Activated CD8-positive, alpha-beta T cell treated with anti-CD3 and anti-CD28 coated beads, Interleukin-2, amount 10 ng/mL, durations not matched to agents 7 days and 5 days (primary cell): ENCODE measurements at regions of chr13 and their contacts with region 1.

Region 1: GRCh38 chr13:39616087-39616694 is 13.2 kb upstream of the LHFPL6 start:
- DNase-seq: peak; percentile 57
- ATAC-seq: peak; percentile 76
- H3K4me3 Mint-ChIP-seq: no peak overlapping the region
- H3K27ac Mint-ChIP-seq: no peak overlapping the region
- H3K4me1 Mint-ChIP-seq: no peaks in the 10 kb centered on the region
- H3K27me3 Mint-ChIP-seq: peaks cover 11% of the 10 kb centered on the region

Region 2: GRCh38 chr13:39051157-39051556 is 565.0 kb before region 1 on chr13:
- CTCF ChIA-PET with region 1: interaction called, 12 read pairs
- POLR2A ChIA-PET with region 1: no interaction called
- DNase-seq: no peak
- ATAC-seq: no peak
- H3K4me3 Mint-ChIP-seq: no peak overlapping the region
- H3K27ac Mint-ChIP-seq: no peak overlapping the region
- H3K4me1 Mint-ChIP-seq: no peaks in the 10 kb centered on the region
- H3K27me3 Mint-ChIP-seq: no peaks in the 10 kb centered on the region

Region 3: DNA sequence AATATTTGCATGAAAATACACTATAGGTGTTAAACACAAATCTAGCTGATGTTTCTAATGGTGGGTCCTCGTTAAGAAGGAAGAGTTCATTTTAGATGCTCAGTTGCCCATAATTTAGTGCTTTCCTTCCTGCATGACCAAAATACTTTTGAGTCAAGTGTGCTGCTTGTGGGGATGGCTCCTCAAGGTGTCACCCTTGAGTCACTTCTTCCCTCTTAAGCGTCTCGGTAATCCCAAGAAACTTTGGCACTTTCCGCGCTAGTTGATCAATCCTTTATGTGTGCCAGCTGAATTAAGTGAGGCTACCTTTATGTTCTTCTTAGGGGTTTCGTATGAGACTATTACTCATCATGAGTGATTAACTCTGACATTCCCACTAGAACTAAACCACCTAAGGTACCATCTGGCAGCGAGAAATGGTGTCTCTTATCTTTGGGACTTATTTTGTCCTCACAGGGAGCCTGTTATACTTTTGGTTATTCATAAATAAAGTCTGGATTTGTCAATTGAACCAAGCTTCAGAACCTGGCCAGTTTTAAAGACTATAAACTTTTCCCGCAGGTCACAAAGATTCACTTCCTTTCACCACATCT is 471.2 kb before region 1 on chr13:
- CTCF ChIA-PET with region 1: interaction called, 10 read pairs
- POLR2A ChIA-PET with region 1: no interaction called
- DNase-seq: peak; percentile 35
- ATAC-seq: no peak
- H3K4me3 Mint-ChIP-seq: no peak overlapping the region
- H3K27ac Mint-ChIP-seq: no peak overlapping the region
- H3K4me1 Mint-ChIP-seq: no peaks in the 10 kb centered on the region
- H3K27me3 Mint-ChIP-seq: peaks cover 16% of the 10 kb centered on the region

Region 4: GRCh38 chr13:39575638-39576238 is 40.5 kb before region 1 on chr13:
- CTCF ChIA-PET with region 1: interaction called, 11 read pairs
- POLR2A ChIA-PET with region 1: no interaction called
- DNase-seq: no peak
- ATAC-seq: no peak
- H3K4me3 Mint-ChIP-seq: no peak overlapping the region
- H3K27ac Mint-ChIP-seq: no peak overlapping the region
- H3K4me1 Mint-ChIP-seq: no peaks in the 10 kb centered on the region
- H3K27me3 Mint-ChIP-seq: peaks cover 2% of the 10 kb centered on the region

Region 5: GRCh38 chr13:39604756-39605155 is 11.4 kb before region 1 on chr13:
- CTCF ChIA-PET with region 1: interaction called, 18 read pairs
- POLR2A ChIA-PET with region 1: no interaction called
- DNase-seq: no peak
- ATAC-seq: no peak
- H3K4me3 Mint-ChIP-seq: no peak overlapping the region
- H3K27ac Mint-ChIP-seq: no peak overlapping the region
- H3K4me1 Mint-ChIP-seq: peaks cover 9% of the 10 kb centered on the region
- H3K27me3 Mint-ChIP-seq: peaks cover 46% of the 10 kb centered on the region